ENCODE measurements at regions of chr3 and their contacts with region 1.

Region 1: GRCh38 chr3:179852142-179852905 is 184.4 kb downstream of the PEX5L start:
- DNase-seq: no peak
- H3K4me3 ChIP-seq: no peak overlapping the region
- H3K27ac ChIP-seq: no peak overlapping the region
- H3K4me1 ChIP-seq: no peaks in the 10 kb centered on the region
- H3K27me3 ChIP-seq: no peaks in the 10 kb centered on the region
- CTCF ChIP-seq: peak; percentile 57 to 60 (median 57)
- EP300 ChIP-seq: no peak
- POLR2A ChIP-seq: no peak
- RAD21 ChIP-seq: peak; percentile 51 to 61

Region 2: DNA sequence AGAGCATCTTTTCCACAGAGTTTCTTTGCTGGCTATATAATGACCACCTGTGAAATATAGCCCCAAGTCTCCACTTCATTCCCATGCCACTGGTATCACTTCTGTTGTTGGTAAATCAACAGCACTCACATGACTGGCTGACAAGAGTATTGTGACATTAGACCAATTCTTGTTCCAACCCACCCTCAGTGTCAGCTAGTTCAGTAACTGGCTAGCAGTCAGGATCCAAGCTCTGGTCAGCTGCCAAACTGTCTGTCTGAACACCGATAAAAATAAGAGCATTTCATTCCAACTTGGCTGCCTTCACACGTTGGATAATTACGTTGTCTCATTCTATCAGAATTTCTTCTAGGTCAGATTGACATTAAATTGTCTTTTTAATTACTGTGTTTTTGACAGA is 32.9 kb before region 1 on chr3:
- CTCF ChIA-PET with region 1: interaction called, 14 read pairs
- POLR2A ChIA-PET with region 1: no interaction called
- DNase-seq: no peak
- H3K4me3 ChIP-seq: no peak overlapping the region
- H3K27ac ChIP-seq: no peak overlapping the region
- H3K4me1 ChIP-seq: no peaks in the 10 kb centered on the region
- H3K27me3 ChIP-seq: no peaks in the 10 kb centered on the region
- CTCF ChIP-seq: no peak
- EP300 ChIP-seq: no peak
- POLR2A ChIP-seq: no peak
- RAD21 ChIP-seq: no peak

Region 3: DNA sequence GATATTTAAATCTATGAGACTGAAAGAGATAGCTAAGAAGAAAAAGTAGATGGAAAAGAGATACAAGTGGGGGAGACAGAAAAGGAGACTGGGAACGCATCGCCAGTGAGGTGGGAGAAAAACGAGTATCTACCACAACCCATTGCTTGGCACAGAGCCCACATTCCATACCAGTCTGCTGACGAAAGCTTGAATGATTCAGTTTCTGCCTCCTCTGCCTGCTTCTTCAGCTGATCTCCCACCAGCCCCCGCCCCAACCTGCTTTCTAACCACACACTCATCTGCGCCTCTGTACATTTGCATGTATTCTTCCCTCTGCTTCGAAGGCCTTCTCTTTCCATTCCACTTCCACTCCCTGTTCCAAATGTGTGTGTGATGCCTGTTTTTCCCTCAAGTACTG is 11.3 kb before region 1 on chr3:
- CTCF ChIA-PET with region 1: interaction called, 19 read pairs
- POLR2A ChIA-PET with region 1: no interaction called
- DNase-seq: no peak
- H3K4me3 ChIP-seq: no peak overlapping the region
- H3K27ac ChIP-seq: no peak overlapping the region
- H3K4me1 ChIP-seq: no peaks in the 10 kb centered on the region
- H3K27me3 ChIP-seq: no peaks in the 10 kb centered on the region
- CTCF ChIP-seq: no peak
- EP300 ChIP-seq: no peak
- POLR2A ChIP-seq: no peak
- RAD21 ChIP-seq: no peak

Region 4: GRCh38 chr3:179865861-179866505 is 13.7 kb after region 1 on chr3:
- CTCF ChIA-PET with region 1: interaction called, 20 read pairs
- POLR2A ChIA-PET with region 1: interaction called, 5 read pairs
- DNase-seq: no peak
- H3K4me3 ChIP-seq: no peak overlapping the region
- H3K27ac ChIP-seq: no peak overlapping the region
- H3K4me1 ChIP-seq: no peaks in the 10 kb centered on the region
- H3K27me3 ChIP-seq: no peaks in the 10 kb centered on the region
- CTCF ChIP-seq: no peak
- EP300 ChIP-seq: no peak
- POLR2A ChIP-seq: no peak
- RAD21 ChIP-seq: no peak

Region 5: DNA sequence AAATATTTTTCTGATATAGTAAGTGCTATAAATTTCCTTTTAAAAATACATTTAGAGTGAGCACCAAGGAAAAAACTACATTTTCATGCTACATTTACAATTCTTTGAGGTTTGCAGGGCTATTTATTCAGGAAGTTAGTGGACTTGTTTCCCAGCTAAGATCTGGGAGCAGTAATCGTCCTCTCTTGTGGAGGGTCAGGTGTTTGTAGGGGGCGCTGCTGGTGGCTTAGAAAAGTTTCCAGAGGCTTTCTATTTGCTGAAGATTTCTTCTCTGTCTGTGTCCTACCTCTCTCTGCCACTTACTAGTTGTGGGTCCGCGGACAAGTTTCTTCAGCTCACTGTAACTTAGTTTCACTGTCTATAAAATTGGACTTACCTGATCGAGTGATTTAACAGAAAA is 20.5 kb after region 1 on chr3:
- CTCF ChIA-PET with region 1: interaction called, 20 read pairs
- POLR2A ChIA-PET with region 1: interaction called, 5 read pairs
- DNase-seq: no peak
- H3K4me3 ChIP-seq: no peak overlapping the region
- H3K27ac ChIP-seq: no peak overlapping the region
- H3K4me1 ChIP-seq: peaks cover 0 to 3% (median 0%) of the 10 kb centered on the region in 4 experiments; a peak in 2 of 7 replicates
- H3K27me3 ChIP-seq: no peaks in the 10 kb centered on the region
- CTCF ChIP-seq: peak; percentile 31 to 56 (median 49)
- EP300 ChIP-seq: no peak
- POLR2A ChIP-seq: no peak
- RAD21 ChIP-seq: peak; percentile 51 to 57

Region 6: DNA sequence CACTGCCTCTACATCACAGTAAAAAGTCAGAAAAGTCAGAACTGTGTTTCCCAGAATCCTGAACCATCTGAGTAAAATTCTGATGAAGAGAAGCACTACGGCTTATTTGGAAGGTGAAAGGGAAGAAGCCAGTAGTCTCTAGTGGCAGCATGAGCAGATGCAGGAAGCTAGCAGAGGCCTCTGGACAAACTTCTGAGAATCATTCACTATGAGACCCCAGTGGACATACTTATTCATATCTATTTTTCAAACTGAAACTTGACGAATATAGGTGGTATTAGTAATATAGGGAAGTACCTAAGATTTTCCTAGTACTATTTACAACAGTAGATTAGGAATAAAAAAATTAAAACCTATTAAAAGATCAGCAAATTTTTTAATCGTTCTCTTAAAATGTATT is 476.9 kb after region 1 on chr3:
- CTCF ChIA-PET with region 1: no interaction called
- POLR2A ChIA-PET with region 1: no interaction called
- DNase-seq: no peak
- H3K4me3 ChIP-seq: no peak overlapping the region
- H3K27ac ChIP-seq: no peak overlapping the region
- H3K4me1 ChIP-seq: no peaks in the 10 kb centered on the region
- H3K27me3 ChIP-seq: peaks cover 0 to 2% (median 0%) of the 10 kb centered on the region in 4 experiments; a peak in 1 of 7 replicates
- CTCF ChIP-seq: peak in 2 of 3 experiments; percentile 7 to 9; a peak in 1 of 4 replicates
- EP300 ChIP-seq: no peak
- POLR2A ChIP-seq: no peak
- RAD21 ChIP-seq: peak; percentile 20 to 33; a peak in 3 of 4 replicates